ENCODE measurements at regions of chr17 and their contacts with region 1.

Region 1: GRCh38 chr17:48944519-48945260 is at the start of gene SNF8:
- DNase-seq: peak; percentile 90
- ATAC-seq: peak; percentile 97
- H3K4me3 ChIP-seq: peak within 1 kb of the TSS; percentile 75 to 91 (median 90)
- H3K27ac ChIP-seq: peak within 1 kb of the TSS; percentile 86
- H3K4me1 ChIP-seq: peaks cover 27% of the 10 kb centered on the region
- H3K27me3 ChIP-seq: no peaks in the 10 kb centered on the region; a peak in 1 of 5 replicates
- CTCF ChIP-seq: peak; percentile 35; the same call in 1 of the 2 replicates
- EP300 ChIP-seq: no peak; a peak in 1 of 4 replicates
- POLR2A ChIP-seq: peak; percentile 91 to 92
- RAD21 ChIP-seq: peak; percentile 71; the same call in 1 of the 2 replicates
- total RNA-seq, gene SNF8: 152 and 153 TPM in 2 replicates

Region 2: GRCh38 chr17:48678141-48678971 is 266.3 kb before region 1 on chr17:
- CTCF ChIA-PET with region 1: no interaction called
- POLR2A ChIA-PET with region 1: no interaction called
- in situ Hi-C with region 1: no loop called
- intact Hi-C with region 1: no loop called
- DNase-seq: peak; percentile 48
- ATAC-seq: peak; percentile 98
- H3K4me3 ChIP-seq: peak overlapping the region in 1 of 3 experiments; percentile 51; a peak in 1 of 6 replicates
- H3K27ac ChIP-seq: no peak overlapping the region
- H3K4me1 ChIP-seq: 0 out of 2 replicates have a peak, but pooled peaks cover 9% of the 10 kb centered on the region
- H3K27me3 ChIP-seq: peaks cover 0 to 26% of the 10 kb centered on the region in 2 experiments; a peak in 3 of 5 replicates
- CTCF ChIP-seq: peak; percentile 98
- EP300 ChIP-seq: no peak
- POLR2A ChIP-seq: no peak
- RAD21 ChIP-seq: peak; percentile 94

Region 3: DNA sequence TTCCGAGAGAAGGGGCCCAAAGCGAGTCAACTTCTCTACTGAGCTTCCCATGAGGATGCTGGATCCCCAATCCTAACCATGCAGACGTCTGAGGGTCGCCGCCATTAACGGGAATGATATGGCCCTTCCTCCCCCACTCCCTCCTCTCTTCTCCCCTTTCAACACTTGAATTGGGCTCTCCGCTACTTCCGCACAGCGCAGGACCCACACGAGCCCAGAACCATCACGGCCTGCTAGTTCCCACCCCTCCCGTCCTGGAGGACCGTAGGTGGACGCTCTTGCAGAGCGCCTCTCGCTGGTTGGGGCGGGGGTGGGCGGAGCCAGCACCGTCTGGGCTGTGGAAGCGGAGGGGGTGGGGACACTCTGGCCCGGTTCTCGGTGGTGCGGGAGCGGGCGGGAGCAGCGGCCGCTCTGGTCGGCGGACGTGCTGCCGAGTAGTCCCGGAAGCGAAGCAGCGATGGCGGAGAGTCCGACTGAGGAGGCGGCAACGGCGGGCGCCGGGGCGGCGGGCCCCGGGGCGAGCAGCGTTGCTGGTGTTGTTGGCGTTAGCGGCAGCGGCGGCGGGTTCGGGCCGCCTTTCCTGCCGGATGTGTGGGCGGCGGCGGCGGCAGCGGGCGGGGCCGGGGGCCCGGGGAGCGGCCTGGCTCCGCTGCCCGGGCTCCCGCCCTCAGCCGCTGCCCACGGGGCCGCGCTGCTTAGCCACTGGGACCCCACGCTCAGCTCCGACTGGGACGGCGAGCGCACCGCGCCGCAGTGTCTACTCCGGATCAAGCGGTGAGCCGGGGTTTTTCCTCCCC is 36.4 kb before region 1 on chr17 and contains the start of gene UBE2Z:
- CTCF ChIA-PET with region 1: no interaction called
- POLR2A ChIA-PET with region 1: interaction called, 19 read pairs
- in situ Hi-C with region 1: no loop called
- intact Hi-C with region 1: no loop called
- DNase-seq: peak; percentile 95
- ATAC-seq: peak; percentile 92
- H3K4me3 ChIP-seq: peak within 1 kb of the TSS; percentile 82 to 97 (median 94)
- H3K27ac ChIP-seq: peak within 1 kb of the TSS; percentile 91
- H3K4me1 ChIP-seq: peaks cover 69% of the 10 kb centered on the region
- H3K27me3 ChIP-seq: no peaks in the 10 kb centered on the region; a peak in 1 of 5 replicates
- CTCF ChIP-seq: peak; percentile 80
- EP300 ChIP-seq: 0 out of 4 replicates have a peak, but pooled peaks of 1 of the 2 experiments have one; percentile 43
- POLR2A ChIP-seq: peak; percentile 90 to 92
- RAD21 ChIP-seq: peak; percentile 49; the same call in 1 of the 2 replicates
- total RNA-seq, gene UBE2Z: 63.2 and 72.7 TPM in 2 replicates

Region 4: DNA sequence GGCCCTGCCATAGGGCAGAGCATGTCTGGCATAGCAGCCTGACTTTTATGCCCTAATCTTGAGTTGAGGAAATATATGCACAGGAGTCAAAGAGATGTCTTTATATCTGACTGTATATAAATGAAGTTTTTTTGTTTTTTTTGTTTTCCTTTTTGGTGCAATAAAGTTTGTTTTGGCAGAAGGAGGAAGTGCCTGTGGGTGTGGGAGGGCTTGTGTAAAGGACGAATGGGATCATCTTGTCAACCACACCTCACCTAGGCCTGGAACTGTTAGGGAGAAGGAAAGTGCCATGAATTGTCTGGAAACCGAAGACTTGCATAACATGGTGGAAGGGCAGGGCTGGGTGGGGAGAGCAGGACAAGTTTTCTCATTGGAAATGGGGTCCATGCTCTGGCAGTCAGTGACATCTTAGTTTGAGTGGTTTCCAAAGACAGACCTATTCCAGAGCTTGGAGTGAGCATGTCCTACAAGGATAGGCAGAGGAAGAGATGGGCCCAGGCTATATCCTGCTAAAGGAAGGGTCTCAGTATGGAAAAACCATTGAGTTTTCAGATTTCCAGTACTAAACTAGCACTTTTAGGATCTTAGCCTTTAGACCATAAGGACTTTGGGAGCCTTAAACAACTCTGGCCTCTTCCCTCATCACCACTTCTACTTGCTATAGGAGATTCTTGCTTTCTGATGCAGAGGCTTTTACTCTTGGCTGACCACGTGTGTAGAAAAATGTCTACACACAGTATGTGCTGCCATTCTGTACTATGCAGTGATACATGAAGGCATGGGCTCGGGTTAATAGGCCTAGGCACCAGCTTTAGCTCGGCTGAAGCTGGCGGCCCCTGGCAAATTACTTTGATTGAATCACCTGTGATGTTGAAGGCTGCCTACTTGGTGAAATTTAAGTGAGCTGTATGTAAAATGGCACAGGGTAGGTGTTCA is 15.5 kb before region 1 on chr17:
- CTCF ChIA-PET with region 1: no interaction called
- POLR2A ChIA-PET with region 1: interaction called, 28 read pairs
- in situ Hi-C with region 1: no loop called
- intact Hi-C with region 1: no loop called
- DNase-seq: no peak
- ATAC-seq: no peak; the same call in 2 of the 3 replicates
- H3K4me3 ChIP-seq: no peak overlapping the region
- H3K27ac ChIP-seq: no peak overlapping the region
- H3K4me1 ChIP-seq: peaks cover 21% of the 10 kb centered on the region
- H3K27me3 ChIP-seq: no peaks in the 10 kb centered on the region
- CTCF ChIP-seq: no peak
- EP300 ChIP-seq: no peak
- POLR2A ChIP-seq: peak; percentile 15 to 36; a peak in 2 of 4 replicates
- RAD21 ChIP-seq: no peak

Region 5: DNA sequence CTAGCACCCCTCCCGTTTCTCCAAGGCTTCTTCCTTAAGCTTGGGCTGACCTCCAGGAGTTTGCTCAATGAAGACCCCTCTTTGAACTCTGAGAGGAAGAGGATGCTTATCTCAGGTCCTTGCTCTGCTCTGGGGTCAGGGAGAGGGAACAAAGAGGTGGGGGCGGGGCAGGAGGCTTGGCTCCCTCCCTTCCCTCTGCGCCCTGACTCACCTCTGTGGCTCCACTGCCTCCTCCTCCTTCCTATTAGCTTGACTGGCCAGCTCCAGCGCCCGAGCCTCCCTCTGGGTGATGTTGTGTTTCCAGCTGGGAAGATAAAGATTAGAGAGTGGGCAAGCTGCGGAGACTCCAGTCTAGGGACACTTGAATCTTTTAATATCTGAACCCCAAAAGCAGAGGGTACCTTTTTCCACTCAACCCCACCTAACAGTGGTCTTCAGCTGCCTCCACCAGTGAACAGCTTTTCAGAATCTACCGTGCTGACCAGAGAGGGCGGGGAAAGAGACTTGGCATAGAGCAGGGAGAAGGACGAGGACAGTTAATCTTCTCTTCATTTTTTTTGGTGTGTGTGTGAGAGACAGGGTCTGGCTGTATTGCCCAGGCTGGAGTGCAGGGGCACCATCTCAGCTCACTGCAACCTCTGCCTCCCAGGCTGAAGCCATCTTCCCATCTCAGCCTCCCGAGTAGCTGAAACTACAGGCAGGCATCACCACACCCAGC is 17.0 kb after region 1 on chr17:
- CTCF ChIA-PET with region 1: no interaction called
- POLR2A ChIA-PET with region 1: interaction called, 46 read pairs
- in situ Hi-C with region 1: no loop called
- intact Hi-C with region 1: no loop called
- DNase-seq: peak; percentile 78
- ATAC-seq: peak; percentile 89
- H3K4me3 ChIP-seq: peak overlapping the region; percentile 55 to 74 (median 58)
- H3K27ac ChIP-seq: peak overlapping the region; percentile 49
- H3K4me1 ChIP-seq: peaks cover 54% of the 10 kb centered on the region
- H3K27me3 ChIP-seq: no peaks in the 10 kb centered on the region
- CTCF ChIP-seq: 0 out of 2 replicates have a peak, but pooled peaks have one; percentile 12
- EP300 ChIP-seq: peak in 1 of 2 experiments; percentile 69; a peak in 1 of 4 replicates
- POLR2A ChIP-seq: no peak; a peak in 1 of 4 replicates
- RAD21 ChIP-seq: no peak